ENCODE measurements at regions of chr1 and their contacts with region 1.

Region 1: DNA sequence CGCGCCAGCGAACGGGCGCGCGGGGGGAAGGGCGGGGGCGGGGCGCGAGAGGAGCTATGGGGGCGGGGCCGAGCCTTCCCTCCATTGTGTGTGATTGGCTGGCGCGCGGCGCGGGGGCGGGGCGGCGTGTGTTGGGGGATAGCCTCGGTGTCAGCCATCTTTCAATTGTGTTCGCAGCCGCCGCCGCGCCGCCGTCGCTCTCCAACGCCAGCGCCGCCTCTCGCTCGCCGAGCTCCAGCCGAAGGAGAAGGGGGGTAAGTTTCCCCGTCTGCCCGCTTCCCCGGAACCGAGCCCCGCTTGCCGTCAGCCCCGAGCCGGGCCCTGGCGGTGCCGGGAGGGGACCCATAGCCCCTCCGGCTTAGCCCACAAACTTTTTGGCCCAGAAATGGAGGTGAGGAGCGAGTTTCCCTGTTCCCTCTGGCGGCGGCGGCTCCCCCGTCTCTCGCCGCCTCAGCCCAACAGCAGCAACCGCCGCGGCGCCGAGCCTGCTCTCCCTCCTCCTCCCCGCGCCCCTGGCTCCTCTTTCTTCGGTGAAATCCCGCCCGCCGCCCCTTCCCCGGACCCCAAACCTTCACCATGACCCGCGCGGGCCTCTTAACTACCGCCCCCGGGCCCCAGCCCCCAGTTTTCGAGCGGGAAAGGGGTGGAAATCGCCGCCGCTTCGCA is at the start of gene H3-3A:
- DNase-seq: peak; percentile 82 to 98
- H3K4me3 ChIP-seq: peak within 1 kb of the TSS; percentile 91 to 100 (median 94)
- H3K27ac ChIP-seq: peak within 1 kb of the TSS; percentile 95
- H3K4me1 ChIP-seq: peaks cover 0 to 9% (median 2%) of the 10 kb centered on the region in 4 experiments; a peak in 4 of 7 replicates
- H3K27me3 ChIP-seq: no peaks in the 10 kb centered on the region
- CTCF ChIP-seq: no peak
- EP300 ChIP-seq: no peak
- POLR2A ChIP-seq: peak; percentile 80 to 97
- RAD21 ChIP-seq: no peak
- total RNA-seq, gene H3-3A: 1,213 and 1,223 TPM in 2 replicates

Region 2: DNA sequence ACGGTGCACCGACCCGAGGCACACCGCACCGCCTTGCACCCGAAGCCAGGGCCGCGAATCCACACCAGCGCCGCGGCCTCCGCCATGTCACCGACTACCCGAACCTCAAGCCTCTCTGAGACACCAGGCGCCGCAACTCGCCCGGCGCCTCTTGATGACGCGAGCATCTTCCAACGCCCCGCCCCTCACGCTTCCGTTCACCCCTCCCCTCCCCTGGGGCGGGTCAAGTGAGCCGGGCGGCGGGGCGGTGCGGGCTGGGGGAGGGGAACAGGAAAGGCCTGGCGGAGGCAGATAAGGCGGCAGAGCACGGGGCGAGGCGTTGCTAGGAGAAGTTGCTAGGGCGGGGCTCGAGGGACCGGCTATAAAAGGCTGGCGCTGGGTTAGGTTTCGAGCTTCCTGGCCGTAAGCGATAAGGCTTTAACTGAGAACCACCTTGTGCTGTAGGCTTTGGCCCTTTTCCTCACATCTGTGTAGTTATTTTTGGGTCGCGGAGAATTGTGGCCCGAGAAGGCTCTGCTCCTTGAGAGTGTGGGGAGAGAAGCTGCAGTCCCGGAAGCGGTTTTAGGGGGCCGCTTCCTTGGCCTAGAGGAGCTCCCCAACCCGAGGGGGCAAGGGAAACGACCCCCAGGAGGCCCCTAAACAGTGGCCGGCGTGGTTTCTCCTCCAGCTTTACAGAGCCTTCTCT is 63.3 kb before region 1 on chr1 and contains the start of gene SDE2:
- CTCF ChIA-PET with region 1: interaction called, 4 read pairs
- POLR2A ChIA-PET with region 1: interaction called, 43 read pairs
- DNase-seq: peak; percentile 98 to 99
- H3K4me3 ChIP-seq: peak within 1 kb of the TSS; percentile 90 to 99 (median 96)
- H3K27ac ChIP-seq: peak within 1 kb of the TSS; percentile 76
- H3K4me1 ChIP-seq: peaks cover 7 to 16% (median 13%) of the 10 kb centered on the region in 4 experiments
- H3K27me3 ChIP-seq: no peaks in the 10 kb centered on the region
- CTCF ChIP-seq: no peak; a peak in 1 of 4 replicates
- EP300 ChIP-seq: peak in 1 of 2 experiments; percentile 83; a peak in 1 of 3 replicates
- POLR2A ChIP-seq: peak; percentile 98 to 99
- RAD21 ChIP-seq: peak in 1 of 2 experiments; percentile 10; a peak in 1 of 4 replicates
- total RNA-seq, gene SDE2: 16.5 and 16.7 TPM in 2 replicates

Region 3: DNA sequence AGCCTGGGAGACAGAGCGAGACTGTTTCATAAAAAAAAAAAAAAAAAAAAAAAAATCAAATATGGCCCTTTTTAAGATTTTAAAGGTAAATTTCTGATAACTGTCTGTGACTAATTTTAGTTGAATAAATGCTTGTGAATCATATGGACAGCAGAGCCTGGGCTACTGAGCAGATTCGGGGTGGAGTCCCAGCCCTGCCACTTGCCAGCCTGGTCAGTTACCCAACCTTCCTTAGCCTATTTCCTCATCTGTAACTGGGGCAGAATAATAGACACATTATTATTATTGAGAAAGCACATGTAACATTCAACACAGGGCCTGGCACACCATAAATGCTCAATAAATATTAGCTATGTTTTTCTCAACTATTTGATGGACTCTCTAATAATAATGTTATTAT is 11.3 kb before region 1 on chr1:
- CTCF ChIA-PET with region 1: interaction called, 11 read pairs
- POLR2A ChIA-PET with region 1: interaction called, 32 read pairs
- DNase-seq: no peak
- H3K4me3 ChIP-seq: no peak overlapping the region
- H3K27ac ChIP-seq: no peak overlapping the region
- H3K4me1 ChIP-seq: peaks cover 0 to 4% (median 2%) of the 10 kb centered on the region in 4 experiments; a peak in 4 of 7 replicates
- H3K27me3 ChIP-seq: no peaks in the 10 kb centered on the region
- CTCF ChIP-seq: no peak
- EP300 ChIP-seq: no peak
- POLR2A ChIP-seq: no peak
- RAD21 ChIP-seq: no peak

Region 4: DNA sequence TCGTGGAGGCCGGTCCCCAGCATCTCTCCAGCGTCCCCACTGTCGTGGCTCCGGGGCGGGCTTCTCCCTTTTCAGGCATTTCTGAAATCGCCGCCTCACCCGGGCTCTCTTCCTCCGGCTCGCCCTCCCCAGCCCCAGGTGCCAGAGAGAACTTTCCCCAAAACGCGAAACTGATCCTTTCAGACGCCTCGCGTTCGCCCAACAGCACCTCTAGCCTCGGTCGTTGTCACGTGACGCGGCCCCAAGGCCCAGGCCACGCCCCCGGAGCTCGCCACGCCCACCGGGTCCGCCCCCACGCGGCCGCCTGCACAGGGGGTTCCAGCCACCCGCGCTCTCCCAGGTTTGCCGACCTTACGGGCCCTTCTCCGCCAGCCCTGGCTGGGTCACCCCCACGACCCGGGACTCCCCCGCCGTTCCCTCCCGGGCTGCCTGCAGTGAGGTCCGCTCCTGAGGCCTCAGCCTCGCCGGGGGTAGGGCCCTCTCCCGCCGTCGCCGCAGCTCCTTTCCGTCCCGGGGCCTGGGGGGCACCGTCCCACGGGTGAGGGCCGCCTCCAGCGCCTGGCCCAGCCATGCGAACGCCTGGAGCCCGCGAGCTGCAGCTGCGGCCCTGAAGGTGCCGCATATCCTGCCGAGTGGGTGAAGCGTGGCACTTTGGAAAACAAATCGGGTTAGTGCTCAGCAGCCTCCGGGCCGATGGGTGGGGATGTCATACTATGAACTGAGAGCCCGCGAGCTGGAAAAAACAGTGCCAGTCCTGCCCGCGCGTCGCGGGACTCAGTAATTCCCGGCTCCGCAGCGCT is 20.8 kb after region 1 on chr1:
- CTCF ChIA-PET with region 1: interaction called, 36 read pairs
- POLR2A ChIA-PET with region 1: interaction called, 51 read pairs
- DNase-seq: peak in 1 of 2 experiments; percentile 98
- H3K4me3 ChIP-seq: peak overlapping the region; percentile 60 to 81 (median 71)
- H3K27ac ChIP-seq: no peak overlapping the region
- H3K4me1 ChIP-seq: peaks cover 0 to 5% (median 3%) of the 10 kb centered on the region in 4 experiments; a peak in 5 of 7 replicates
- H3K27me3 ChIP-seq: peaks cover 0 to 11% (median 9%) of the 10 kb centered on the region in 4 experiments; a peak in 3 of 7 replicates
- CTCF ChIP-seq: no peak
- EP300 ChIP-seq: no peak
- POLR2A ChIP-seq: no peak
- RAD21 ChIP-seq: 0 out of 4 replicates have a peak, but pooled peaks of 1 of the 2 experiments have one; percentile 0

Region 5: DNA sequence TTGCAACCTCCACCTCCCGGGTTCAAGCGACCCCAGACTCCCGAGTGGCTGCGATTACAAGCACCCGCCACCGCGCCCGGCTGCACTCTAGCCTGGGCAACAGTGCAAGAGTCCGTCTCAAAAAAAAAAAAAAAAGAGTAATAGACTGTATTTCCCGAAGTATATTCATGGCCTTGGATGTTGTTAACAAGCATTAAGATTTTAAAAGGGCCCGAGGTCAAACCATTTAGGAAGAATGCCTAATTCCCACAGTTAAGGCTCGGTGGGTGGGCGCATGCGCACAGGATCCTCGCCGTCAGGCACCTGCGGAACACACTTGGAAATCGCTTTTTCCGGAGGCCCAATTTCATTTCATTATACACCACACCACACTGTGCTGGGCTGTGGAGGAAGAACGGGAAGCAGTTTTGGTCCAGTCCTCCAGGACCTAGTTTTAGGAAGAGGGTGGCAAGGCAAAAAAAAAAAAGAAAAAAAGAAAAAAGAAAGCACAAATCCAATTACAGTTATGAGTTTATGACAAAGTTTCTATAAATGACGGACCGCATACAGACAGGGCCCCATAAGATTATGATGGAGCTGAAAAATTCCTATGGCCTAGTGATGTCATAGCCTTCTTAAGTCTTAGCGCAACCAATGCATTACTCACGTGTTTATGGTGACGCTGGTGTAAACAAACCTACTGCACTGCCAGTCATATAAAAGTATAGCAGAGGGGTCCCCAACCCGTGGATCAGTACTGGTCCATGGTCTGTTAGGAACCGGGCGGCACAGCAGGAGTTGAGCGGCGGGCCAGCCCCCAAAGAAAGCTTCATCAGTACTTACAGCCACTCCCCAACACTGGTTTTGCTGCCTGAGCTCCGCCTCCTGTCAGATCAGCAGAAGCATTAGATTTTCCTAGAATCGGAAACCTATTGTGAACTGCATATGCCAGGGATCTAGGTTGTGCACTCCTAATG is 38.0 kb after region 1 on chr1:
- CTCF ChIA-PET with region 1: interaction called, 14 read pairs
- POLR2A ChIA-PET with region 1: interaction called, 30 read pairs
- DNase-seq: no peak
- H3K4me3 ChIP-seq: peak overlapping the region; percentile 27 to 63 (median 41); a peak in 7 of 8 replicates
- H3K27ac ChIP-seq: no peak overlapping the region
- H3K4me1 ChIP-seq: peaks cover 4 to 13% (median 8%) of the 10 kb centered on the region in 4 experiments; a peak in 5 of 7 replicates
- H3K27me3 ChIP-seq: no peaks in the 10 kb centered on the region; a peak in 1 of 7 replicates
- CTCF ChIP-seq: no peak
- EP300 ChIP-seq: no peak
- POLR2A ChIP-seq: no peak
- RAD21 ChIP-seq: no peak

Measured in H1 (cell line).